Calu3 (cell line): ENCODE measurements at regions of chr2 and their contacts with region 1.

Region 1: GRCh38 chr2:202831242-202832220 is 40.0 kb downstream of the ICA1L start:
- DNase-seq: peak; percentile 70
- H3K4me3 Mint-ChIP-seq: no peak overlapping the region
- H3K27ac Mint-ChIP-seq: peak overlapping the region; percentile 43
- H3K4me1 Mint-ChIP-seq: peaks cover 16% of the 10 kb centered on the region
- H3K27me3 Mint-ChIP-seq: no peaks in the 10 kb centered on the region
- CTCF ChIP-seq: peak; percentile 32

Region 2: DNA sequence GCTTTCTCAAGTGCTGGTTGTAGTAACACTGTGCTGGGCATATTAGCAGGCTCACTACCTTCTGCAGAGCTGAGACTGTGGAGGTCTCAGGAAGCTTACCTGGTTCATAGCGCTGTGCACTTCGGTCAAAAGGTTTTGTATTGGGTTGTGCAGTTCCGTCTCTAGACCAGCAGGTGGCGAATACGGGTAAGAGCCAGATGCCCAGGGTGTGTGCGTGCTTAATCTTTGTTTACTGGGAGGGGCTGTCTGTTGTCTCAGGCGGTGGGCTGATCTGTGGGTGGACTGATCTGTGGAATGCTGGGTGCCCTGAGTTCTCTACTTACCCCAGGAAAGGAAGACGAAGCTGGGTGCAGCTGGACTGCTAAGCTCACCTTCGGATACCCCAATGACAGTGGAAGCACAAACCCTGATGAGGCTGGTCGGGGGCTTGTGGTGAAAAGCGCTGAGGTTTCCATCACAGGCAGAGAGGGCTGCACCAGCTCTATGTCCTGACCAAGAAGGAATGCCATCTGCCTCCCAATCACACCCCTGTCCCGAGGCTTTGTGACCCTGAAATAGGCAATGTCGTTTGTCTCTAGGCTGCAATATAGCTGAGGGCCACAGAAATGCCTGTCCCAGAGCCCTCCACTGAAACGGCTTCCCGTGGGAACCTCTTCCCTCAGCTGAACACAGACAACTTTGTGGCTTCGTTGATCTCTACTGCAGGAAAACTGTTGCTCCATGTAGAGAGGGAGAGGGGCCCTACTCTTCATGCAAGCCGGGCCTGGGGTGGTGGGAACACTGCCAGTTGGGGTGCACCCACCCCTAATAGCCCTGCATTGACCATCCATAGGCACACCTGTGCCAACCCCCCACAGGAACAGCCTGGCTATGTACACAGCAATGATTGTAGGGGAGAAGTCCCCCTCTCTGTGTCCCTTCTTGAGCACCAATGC is 242.6 kb before region 1 on chr2:
- CTCF ChIA-PET with region 1: no interaction called
- intact Hi-C with region 1: loop called (anchors 5 kb)
- DNase-seq: peak; percentile 66
- H3K4me3 Mint-ChIP-seq: no peak overlapping the region
- H3K27ac Mint-ChIP-seq: no peak overlapping the region
- H3K4me1 Mint-ChIP-seq: peaks cover 10% of the 10 kb centered on the region
- H3K27me3 Mint-ChIP-seq: no peaks in the 10 kb centered on the region
- CTCF ChIP-seq: peak; percentile 98

Region 3: GRCh38 chr2:202870431-202871299 is 39.1 kb after region 1 on chr2:
- CTCF ChIA-PET with region 1: interaction called, 3 read pairs
- intact Hi-C with region 1: loop called (anchors 2 kb)
- DNase-seq: peak; percentile 80
- H3K4me3 Mint-ChIP-seq: peak overlapping the region; percentile 83
- H3K27ac Mint-ChIP-seq: peak overlapping the region; percentile 70
- H3K4me1 Mint-ChIP-seq: no peaks in the 10 kb centered on the region
- H3K27me3 Mint-ChIP-seq: no peaks in the 10 kb centered on the region
- CTCF ChIP-seq: peak; percentile 71

Region 4: DNA sequence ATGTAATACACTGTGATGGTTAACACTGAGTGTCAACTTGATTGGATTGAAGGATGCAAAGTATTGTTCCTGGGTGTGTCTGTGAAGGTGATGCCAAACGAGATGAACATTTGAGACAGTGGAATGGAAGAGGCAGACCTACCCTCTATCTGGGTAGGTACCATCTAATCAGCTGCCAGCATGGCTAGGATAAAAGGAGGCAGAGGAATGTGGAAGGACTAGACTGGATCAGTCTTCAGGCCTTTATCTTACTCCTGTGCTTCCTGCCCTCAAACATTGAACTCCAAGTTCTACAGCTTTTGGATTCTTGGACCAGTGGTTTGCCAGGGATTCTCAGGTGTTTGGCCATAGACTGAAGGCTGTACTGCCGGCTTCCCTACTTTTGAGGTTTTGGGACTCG is 70.8 kb after region 1 on chr2:
- CTCF ChIA-PET with region 1: no interaction called
- intact Hi-C with region 1: no loop called
- DNase-seq: no peak
- H3K4me3 Mint-ChIP-seq: no peak overlapping the region
- H3K27ac Mint-ChIP-seq: no peak overlapping the region
- H3K4me1 Mint-ChIP-seq: no peaks in the 10 kb centered on the region
- H3K27me3 Mint-ChIP-seq: no peaks in the 10 kb centered on the region
- CTCF ChIP-seq: no peak

Region 5: DNA sequence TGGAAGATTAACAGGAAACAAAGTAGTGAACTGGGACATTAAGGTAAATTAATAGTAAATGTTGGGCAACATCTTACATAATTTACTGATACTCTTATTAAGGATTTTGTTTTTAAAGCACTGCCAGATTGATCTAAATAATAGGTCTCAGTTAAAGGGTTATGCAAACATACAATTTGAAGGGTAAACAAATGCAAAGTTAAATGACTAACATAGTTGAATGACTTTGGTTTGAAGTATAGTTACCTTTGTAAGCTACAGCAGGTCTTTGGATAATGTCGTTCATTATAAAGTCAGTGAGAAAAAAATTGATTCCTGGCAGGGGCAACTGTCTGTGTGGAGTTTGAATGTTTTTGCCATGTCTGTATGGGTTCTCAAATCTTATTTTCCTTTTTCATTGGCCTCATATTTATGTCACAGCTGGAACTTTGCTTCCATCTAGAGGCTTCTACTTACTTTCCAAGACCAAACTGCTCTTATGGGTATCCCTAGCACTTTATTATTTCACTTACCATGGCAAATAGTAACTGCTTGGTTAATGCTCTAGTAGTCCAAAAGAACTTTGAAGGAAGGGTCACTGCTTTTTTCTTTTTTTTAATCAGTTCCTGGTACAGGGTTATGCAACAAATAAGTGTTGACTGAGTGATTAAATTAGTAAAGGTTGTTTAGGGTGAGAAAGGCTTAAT is 290.9 kb after region 1 on chr2:
- CTCF ChIA-PET with region 1: no interaction called
- intact Hi-C with region 1: loop called (anchors 10 kb)
- DNase-seq: no peak
- H3K4me3 Mint-ChIP-seq: no peak overlapping the region
- H3K27ac Mint-ChIP-seq: no peak overlapping the region
- H3K4me1 Mint-ChIP-seq: no peaks in the 10 kb centered on the region
- H3K27me3 Mint-ChIP-seq: no peaks in the 10 kb centered on the region
- CTCF ChIP-seq: no peak

Region 6: GRCh38 chr2:203155406-203155805 is 323.9 kb after region 1 on chr2:
- CTCF ChIA-PET with region 1: no interaction called
- intact Hi-C with region 1: loop called (anchors 10 kb)
- DNase-seq: peak; percentile 5
- H3K4me3 Mint-ChIP-seq: no peak overlapping the region
- H3K27ac Mint-ChIP-seq: no peak overlapping the region
- H3K4me1 Mint-ChIP-seq: no peaks in the 10 kb centered on the region
- H3K27me3 Mint-ChIP-seq: no peaks in the 10 kb centered on the region
- CTCF ChIP-seq: peak; percentile 37

Region 7: GRCh38 chr2:203909261-203909967 is 1077.9 kb after region 1 on chr2:
- CTCF ChIA-PET with region 1: no interaction called
- intact Hi-C with region 1: loop called (anchors 10 kb)
- DNase-seq: peak; percentile 54
- H3K4me3 Mint-ChIP-seq: no peak overlapping the region
- H3K27ac Mint-ChIP-seq: no peak overlapping the region
- H3K4me1 Mint-ChIP-seq: peaks cover 8% of the 10 kb centered on the region
- H3K27me3 Mint-ChIP-seq: no peaks in the 10 kb centered on the region
- CTCF ChIP-seq: peak; percentile 70